Naive thymus-derived CD4-positive, alpha-beta T cell (primary cell): ENCODE measurements at regions of chr3 and their contacts with region 1.

Region 1: GRCh38 chr3:177359593-177360357 is 162.5 kb upstream of the TBL1XR1 start:
- DNase-seq: peak; percentile 95 to 98 (median 96)
- ATAC-seq: peak; percentile 92
- H3K4me3 ChIP-seq: peak overlapping the region; percentile 75
- H3K4me3 Mint-ChIP-seq: peak overlapping the region; percentile 77 to 98 (median 94)
- H3K27ac ChIP-seq: peak overlapping the region; percentile 90
- H3K27ac Mint-ChIP-seq: peak overlapping the region; percentile 96 to 100 (median 98)
- H3K4me1 ChIP-seq: peaks cover 31 to 34% of the 10 kb centered on the region in 2 donors
- H3K4me1 Mint-ChIP-seq: peaks cover 28 to 63% (median 54%) of the 10 kb centered on the region in 7 donors
- H3K27me3 ChIP-seq: no peaks in the 10 kb centered on the region
- H3K27me3 Mint-ChIP-seq: peaks cover 0 to 2% (median 0%) of the 10 kb centered on the region in 5 donors

Region 2: GRCh38 chr3:176650478-176650877 is 709.3 kb before region 1 on chr3:
- CTCF ChIA-PET with region 1: no interaction called
- POLR2A ChIA-PET with region 1: no interaction called
- intact Hi-C with region 1: no loop called
- DNase-seq: no peak
- ATAC-seq: no peak
- H3K4me3 ChIP-seq: no peak overlapping the region
- H3K4me3 Mint-ChIP-seq: no peak overlapping the region
- H3K27ac ChIP-seq: no peak overlapping the region
- H3K27ac Mint-ChIP-seq: no peak overlapping the region
- H3K4me1 ChIP-seq: no peaks in the 10 kb centered on the region
- H3K4me1 Mint-ChIP-seq: peaks cover 0 to 1% (median 0%) of the 10 kb centered on the region in 7 donors
- H3K27me3 ChIP-seq: no peaks in the 10 kb centered on the region
- H3K27me3 Mint-ChIP-seq: no peaks in the 10 kb centered on the region

Region 3: DNA sequence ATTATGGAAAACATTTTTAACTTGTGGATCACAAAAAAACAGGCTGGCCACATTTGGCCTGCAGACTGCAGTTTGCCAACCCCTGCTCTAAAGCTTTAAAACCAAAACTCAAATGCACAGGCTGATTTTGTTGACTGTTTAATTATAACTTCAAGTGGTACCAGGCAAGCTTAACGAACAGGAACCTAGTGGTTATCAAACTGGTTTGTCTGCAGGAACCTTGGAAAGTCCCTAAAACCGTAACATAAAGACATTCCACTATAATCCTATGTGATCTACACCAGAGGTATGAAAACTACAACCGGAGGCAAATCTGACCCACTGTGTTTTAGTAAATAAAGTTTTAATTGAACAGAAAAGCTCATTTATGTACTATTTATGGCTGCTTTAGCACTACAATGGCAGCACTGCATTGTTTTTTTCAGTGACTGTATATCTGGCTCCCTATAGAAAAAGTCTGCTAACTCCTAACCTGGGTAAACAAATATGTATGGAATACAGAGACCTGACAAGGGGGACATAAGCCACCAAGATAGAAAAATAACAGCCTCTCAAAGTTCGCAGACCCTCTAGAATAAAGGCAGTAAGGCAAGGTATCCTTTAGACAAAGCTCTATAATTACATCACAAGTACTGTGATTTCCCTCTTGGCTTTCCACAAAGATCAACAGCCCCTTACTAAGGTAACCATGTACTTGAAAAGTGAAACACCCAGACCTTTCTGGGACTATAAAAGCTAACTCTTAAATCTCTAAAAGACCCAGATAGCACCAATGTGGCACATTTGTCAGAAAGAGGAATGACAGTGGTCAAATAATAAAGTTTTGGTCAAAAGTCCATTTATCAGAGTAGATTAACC is 214.6 kb before region 1 on chr3:
- CTCF ChIA-PET with region 1: no interaction called
- POLR2A ChIA-PET with region 1: interaction called, 9 read pairs
- intact Hi-C with region 1: loop called in 1 of 2 experiments (anchors 2 kb)
- DNase-seq: peak in 7 of 9 donors; percentile 25 to 67 (median 41)
- ATAC-seq: peak; percentile 91
- H3K4me3 ChIP-seq: peak overlapping the region; percentile 30
- H3K4me3 Mint-ChIP-seq: peak overlapping the region in 9 of 10 donors; percentile 51 to 74 (median 68)
- H3K27ac ChIP-seq: peak overlapping the region; percentile 47
- H3K27ac Mint-ChIP-seq: peak overlapping the region; percentile 64 to 94 (median 84)
- H3K4me1 ChIP-seq: peaks cover 39 to 40% of the 10 kb centered on the region in 2 donors
- H3K4me1 Mint-ChIP-seq: peaks cover 41 to 89% (median 71%) of the 10 kb centered on the region in 7 donors
- H3K27me3 ChIP-seq: no peaks in the 10 kb centered on the region
- H3K27me3 Mint-ChIP-seq: no peaks in the 10 kb centered on the region

Region 4: GRCh38 chr3:177337541-177338331 is 22.0 kb before region 1 on chr3:
- CTCF ChIA-PET with region 1: no interaction called
- POLR2A ChIA-PET with region 1: interaction called, 3 read pairs
- intact Hi-C with region 1: loop called in 1 of 2 experiments (anchors 1 kb)
- DNase-seq: peak in 2 of 9 donors; percentile 15 to 76
- ATAC-seq: peak; percentile 58
- H3K4me3 ChIP-seq: no peak overlapping the region
- H3K4me3 Mint-ChIP-seq: peak overlapping the region in 1 of 10 donors; percentile 42
- H3K27ac ChIP-seq: no peak overlapping the region
- H3K27ac Mint-ChIP-seq: peak overlapping the region in 2 of 9 donors; percentile 6 to 72
- H3K4me1 ChIP-seq: peaks cover 5 to 17% of the 10 kb centered on the region in 2 donors
- H3K4me1 Mint-ChIP-seq: peaks cover 15 to 42% (median 21%) of the 10 kb centered on the region in 7 donors
- H3K27me3 ChIP-seq: no peaks in the 10 kb centered on the region
- H3K27me3 Mint-ChIP-seq: no peaks in the 10 kb centered on the region

Region 5: DNA sequence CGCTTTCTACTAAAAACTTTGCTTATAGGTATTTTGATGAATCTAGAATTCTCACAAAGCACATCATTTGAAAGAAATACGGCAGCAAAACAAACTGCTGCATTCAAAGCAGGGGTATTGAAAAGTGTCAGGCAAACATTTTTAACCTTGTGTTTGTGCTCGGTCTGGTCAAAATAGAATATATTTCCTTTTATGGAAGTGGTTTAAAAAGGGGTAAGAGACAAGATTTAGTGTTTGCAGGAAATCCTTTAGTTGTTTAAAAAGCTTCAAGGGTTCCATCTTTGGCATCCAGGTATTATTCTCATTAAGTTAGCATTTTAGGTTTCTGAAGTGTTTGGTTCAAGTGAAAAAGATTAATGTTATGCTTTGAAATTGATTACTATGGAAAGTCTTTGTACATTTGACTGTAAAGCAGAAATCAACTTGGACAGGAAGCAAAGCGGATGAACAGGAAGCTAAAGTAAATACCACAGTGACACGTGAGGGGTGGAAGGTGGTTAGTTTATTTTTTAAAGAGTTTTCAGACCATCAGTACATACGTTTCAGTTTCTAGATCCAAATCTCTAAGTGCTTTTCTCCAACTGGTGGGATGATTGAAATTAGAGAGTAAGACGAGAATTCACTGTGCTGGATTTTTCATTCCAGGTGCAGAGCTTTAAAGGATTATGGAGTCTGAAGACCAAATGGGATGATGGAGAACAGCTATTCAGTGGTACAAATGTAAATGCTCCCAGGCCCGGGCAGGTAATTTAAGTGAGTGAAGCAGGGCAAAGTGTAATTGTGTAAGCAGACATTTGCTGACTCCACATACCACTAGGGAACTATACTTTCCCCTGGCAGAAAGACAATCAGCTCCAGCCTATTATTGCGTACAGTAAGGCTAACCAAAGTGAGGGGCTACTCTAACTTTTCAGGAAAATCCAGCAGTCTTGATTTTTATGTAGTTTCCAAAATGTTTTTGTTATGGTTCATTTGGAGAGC is 179.3 kb after region 1 on chr3:
- CTCF ChIA-PET with region 1: no interaction called
- POLR2A ChIA-PET with region 1: interaction called, 4 read pairs
- intact Hi-C with region 1: loop called in 1 of 2 experiments (anchors 2 kb)
- DNase-seq: peak in 6 of 9 donors; percentile 15 to 52 (median 40)
- ATAC-seq: peak; percentile 74
- H3K4me3 ChIP-seq: peak overlapping the region; percentile 32
- H3K4me3 Mint-ChIP-seq: peak overlapping the region; percentile 58 to 81 (median 78)
- H3K27ac ChIP-seq: no peak overlapping the region
- H3K27ac Mint-ChIP-seq: peak overlapping the region; percentile 70 to 84 (median 81)
- H3K4me1 ChIP-seq: peaks cover 32 to 36% of the 10 kb centered on the region in 2 donors
- H3K4me1 Mint-ChIP-seq: peaks cover 21 to 67% (median 47%) of the 10 kb centered on the region in 7 donors
- H3K27me3 ChIP-seq: no peaks in the 10 kb centered on the region
- H3K27me3 Mint-ChIP-seq: no peaks in the 10 kb centered on the region

Region 6: GRCh38 chr3:177777699-177778098 is 417.9 kb after region 1 on chr3:
- CTCF ChIA-PET with region 1: interaction called, 4 read pairs
- POLR2A ChIA-PET with region 1: interaction called, 3 read pairs
- intact Hi-C with region 1: loop called (anchors 1 kb)
- DNase-seq: peak in 5 of 9 donors; percentile 10 to 35 (median 26)
- ATAC-seq: peak; percentile 65
- H3K4me3 ChIP-seq: no peak overlapping the region
- H3K4me3 Mint-ChIP-seq: peak overlapping the region in 1 of 10 donors; percentile 16
- H3K27ac ChIP-seq: no peak overlapping the region
- H3K27ac Mint-ChIP-seq: peak overlapping the region in 3 of 9 donors; percentile 21 to 55 (median 29)
- H3K4me1 ChIP-seq: peaks cover 9 to 18% of the 10 kb centered on the region in 2 donors
- H3K4me1 Mint-ChIP-seq: peaks cover 13 to 20% (median 15%) of the 10 kb centered on the region in 7 donors
- H3K27me3 ChIP-seq: no peaks in the 10 kb centered on the region
- H3K27me3 Mint-ChIP-seq: no peaks in the 10 kb centered on the region

Region 7: DNA sequence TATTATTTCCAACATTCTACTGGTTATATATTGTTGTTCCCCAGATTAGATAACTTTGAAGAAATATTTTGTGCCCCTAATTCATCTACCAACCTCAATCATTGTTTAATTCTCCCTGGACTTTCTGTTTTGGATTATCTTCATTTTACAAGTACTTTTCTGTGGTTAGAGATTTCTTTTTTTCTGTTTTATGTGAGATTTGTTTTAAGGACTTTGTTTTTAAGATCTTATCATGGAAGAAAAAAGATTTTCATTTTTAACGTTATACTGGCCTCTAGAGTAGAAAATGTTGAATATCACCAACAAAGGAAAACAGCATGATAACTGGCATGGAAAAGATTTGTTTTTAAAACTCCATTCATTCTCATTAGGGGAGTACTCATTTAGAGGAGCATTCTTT is 965.6 kb after region 1 on chr3:
- CTCF ChIA-PET with region 1: no interaction called
- POLR2A ChIA-PET with region 1: no interaction called
- intact Hi-C with region 1: loop called in 1 of 2 experiments (anchors 1 kb)
- DNase-seq: peak in 4 of 9 donors; percentile 5 to 33 (median 22)
- ATAC-seq: no peak
- H3K4me3 ChIP-seq: no peak overlapping the region
- H3K4me3 Mint-ChIP-seq: no peak overlapping the region
- H3K27ac ChIP-seq: no peak overlapping the region
- H3K27ac Mint-ChIP-seq: no peak overlapping the region
- H3K4me1 ChIP-seq: no peaks in the 10 kb centered on the region
- H3K4me1 Mint-ChIP-seq: no peaks in the 10 kb centered on the region
- H3K27me3 ChIP-seq: no peaks in the 10 kb centered on the region
- H3K27me3 Mint-ChIP-seq: no peaks in the 10 kb centered on the region